Astrocyte of the cerebellum (primary cell): ENCODE measurements at regions of chr14 and their contacts with region 1.

Region 1: GRCh38 chr14:22052795-22053194 is 379.2 kb upstream of the OR4E1 start:
- DNase-seq: no peak
- H3K4me3 ChIP-seq: no peak overlapping the region
- CTCF ChIP-seq: no peak

Region 2: GRCh38 chr14:21978184-21978998 is 74.4 kb before region 1 on chr14:
- in situ Hi-C with region 1: no loop called
- DNase-seq: no peak
- H3K4me3 ChIP-seq: no peak overlapping the region
- CTCF ChIP-seq: peak; percentile 69

Region 3: GRCh38 chr14:22084393-22085281 is 31.8 kb after region 1 on chr14:
- in situ Hi-C with region 1: no loop called
- DNase-seq: peak; percentile 57
- H3K4me3 ChIP-seq: no peak overlapping the region
- CTCF ChIP-seq: peak; percentile 66

Region 4: DNA sequence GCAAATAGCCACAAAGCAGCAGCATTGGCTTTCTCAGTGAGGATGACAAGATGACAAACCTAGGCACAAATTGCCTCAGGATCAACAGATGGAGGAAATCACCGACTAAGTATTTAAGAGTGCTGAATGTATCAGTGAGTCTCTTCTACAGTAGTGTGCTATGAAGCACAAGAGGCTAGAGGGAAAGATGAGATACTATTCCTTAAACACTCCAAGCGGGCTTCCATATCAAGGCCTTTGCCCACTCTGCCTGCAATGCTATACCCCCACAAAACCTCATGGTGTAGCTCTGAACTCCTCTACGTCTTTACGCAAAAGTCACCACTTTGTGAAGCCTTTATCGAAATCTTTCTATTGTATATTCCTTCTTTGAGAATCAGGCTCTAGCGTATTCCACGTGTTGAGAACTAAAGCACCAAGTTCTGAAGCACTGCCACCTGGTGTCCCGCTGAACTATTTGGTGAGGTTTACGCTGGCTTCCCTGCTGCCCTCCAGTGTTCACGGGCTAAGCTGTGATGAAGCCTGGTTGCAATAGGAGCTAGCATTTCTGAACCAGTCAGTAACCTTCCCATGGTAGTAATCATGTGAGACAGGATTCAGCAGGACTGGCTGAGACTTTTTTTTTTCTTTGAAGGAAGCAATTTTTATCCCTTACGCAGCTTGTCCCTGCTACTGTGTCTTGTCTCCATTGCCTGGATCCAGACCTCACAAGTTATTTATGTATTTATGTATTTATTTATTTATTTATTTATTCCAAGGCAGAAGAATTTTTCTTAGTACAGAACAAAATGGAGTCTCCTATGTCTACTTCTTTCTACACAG is 47.4 kb after region 1 on chr14:
- in situ Hi-C with region 1: loop called (anchors 5 kb)
- DNase-seq: peak; percentile 22
- H3K4me3 ChIP-seq: no peak overlapping the region
- CTCF ChIP-seq: peak; percentile 68